Activated CD4-positive, alpha-beta T cell treated with anti-CD3 and anti-CD28 coated beads, Interleukin-2, amount 10 ng/mL, durations not matched to agents 7 days and 5 days (primary cell): ENCODE measurements at regions of chr15 and their contacts with region 1.

Region 1: DNA sequence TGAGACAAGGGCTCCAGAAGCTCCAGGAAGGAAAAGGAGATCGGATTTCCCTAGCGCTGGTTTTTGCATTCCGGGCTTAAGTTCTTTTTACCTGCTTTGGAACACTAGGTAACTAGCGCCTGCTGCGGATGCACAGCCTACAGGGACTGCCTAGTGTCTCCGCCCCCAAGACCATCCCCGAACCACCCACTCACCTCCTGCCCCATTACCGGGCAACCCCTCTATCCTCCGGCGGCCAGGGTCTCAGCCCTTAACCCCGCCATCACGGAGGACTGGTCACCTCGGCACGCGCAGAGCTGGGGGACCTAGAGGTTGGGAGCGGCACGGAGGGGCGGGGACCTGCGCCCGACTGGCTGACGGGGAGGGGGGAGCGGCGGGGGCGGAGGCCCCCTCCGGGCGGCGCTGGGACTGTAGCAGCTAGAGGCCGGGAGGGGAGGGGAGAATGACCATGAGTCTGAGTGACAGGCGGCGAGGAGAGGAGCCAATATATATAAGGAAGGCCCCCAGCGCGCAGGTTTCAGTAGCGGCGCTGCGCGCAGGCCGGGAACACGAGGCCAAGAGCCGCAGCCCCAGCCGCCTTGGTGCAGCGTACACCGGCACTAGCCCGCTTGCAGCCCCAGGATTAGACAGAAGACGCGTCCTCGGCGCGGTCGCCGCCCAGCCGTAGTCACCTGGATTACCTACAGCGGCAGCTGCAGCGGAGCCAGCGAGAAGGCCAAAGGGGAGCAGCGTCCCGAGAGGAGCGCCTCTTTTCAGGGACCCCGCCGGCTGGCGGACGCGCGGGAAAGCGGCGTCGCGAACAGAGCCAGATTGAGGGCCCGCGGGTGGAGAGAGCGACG is at the start of gene DLL4:
- DNase-seq: peak; percentile 51
- H3K4me3 Mint-ChIP-seq: peak within 1 kb of the TSS; percentile 60
- H3K27ac Mint-ChIP-seq: no peak within 1 kb of the TSS
- H3K4me1 Mint-ChIP-seq: peaks cover 46% of the 10 kb centered on the region
- H3K27me3 Mint-ChIP-seq: peaks cover 82% of the 10 kb centered on the region
- total RNA-seq, gene DLL4: not detected

Region 2: GRCh38 chr15:40952901-40953712 is 24.1 kb after region 1 on chr15 and contains the start of gene CHAC1:
- CTCF ChIA-PET with region 1: interaction called, 13 read pairs
- POLR2A ChIA-PET with region 1: no interaction called
- DNase-seq: peak; percentile 98
- H3K4me3 Mint-ChIP-seq: peak within 1 kb of the TSS; percentile 94
- H3K27ac Mint-ChIP-seq: peak within 1 kb of the TSS; percentile 94
- H3K4me1 Mint-ChIP-seq: peaks cover 39% of the 10 kb centered on the region
- H3K27me3 Mint-ChIP-seq: no peaks in the 10 kb centered on the region
- total RNA-seq, gene CHAC1: 4.7 to 6.7 TPM